ENCODE measurements at regions of chr19 and their contacts with region 1.

Region 1: DNA sequence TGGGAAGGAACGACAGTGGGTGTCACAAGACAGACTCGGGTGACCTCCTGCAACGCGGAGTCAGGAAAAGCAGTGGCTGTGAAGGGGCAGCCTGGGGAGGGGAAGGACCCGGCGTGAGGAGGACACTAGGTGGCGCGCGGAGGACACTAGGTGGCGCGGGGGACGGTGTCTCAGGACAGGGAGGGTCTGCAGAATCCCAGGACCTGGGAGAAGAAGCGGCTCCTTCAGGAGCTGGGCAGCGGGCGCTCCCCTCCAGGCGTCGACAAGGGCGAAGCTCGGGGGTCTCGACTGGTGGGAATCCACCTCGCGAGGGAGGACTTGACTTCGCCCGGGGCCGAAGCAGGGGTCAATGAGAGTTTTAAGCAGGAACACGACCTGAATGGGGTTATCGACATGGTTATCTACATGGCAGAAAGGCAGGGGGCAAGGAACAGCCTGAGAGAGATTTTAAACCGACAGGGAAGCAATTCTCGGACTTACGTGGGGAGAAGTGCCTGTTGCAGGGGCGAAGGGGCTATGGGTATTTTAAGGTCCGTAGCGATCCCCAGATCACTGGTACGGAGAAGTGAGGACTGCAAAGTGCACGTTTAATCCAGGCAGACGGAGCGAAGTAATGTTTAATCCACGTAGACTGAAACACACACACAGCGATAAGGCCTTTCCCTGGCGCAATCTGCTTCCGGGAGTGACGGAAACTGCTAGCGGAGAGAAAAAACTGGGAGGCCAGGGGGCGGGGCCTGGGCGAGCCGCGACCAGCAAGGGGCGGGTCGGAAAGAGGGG is at the start of gene ZNF616:
- DNase-seq: peak; percentile 97
- ATAC-seq: peak; percentile 82
- H3K4me3 Mint-ChIP-seq: peak within 1 kb of the TSS; percentile 98
- H3K27ac Mint-ChIP-seq: peak within 1 kb of the TSS; percentile 96
- H3K4me1 Mint-ChIP-seq: peaks cover 18% of the 10 kb centered on the region
- H3K27me3 Mint-ChIP-seq: no peaks in the 10 kb centered on the region
- total RNA-seq, gene ZNF616: 6.8 to 7.8 TPM

Region 2: GRCh38 chr19:52237771-52238400 is 98.4 kb after region 1 on chr19:
- CTCF ChIA-PET with region 1: interaction called, 28 read pairs
- DNase-seq: peak; percentile 70
- ATAC-seq: peak; percentile 57
- H3K4me3 Mint-ChIP-seq: no peak overlapping the region
- H3K27ac Mint-ChIP-seq: no peak overlapping the region
- H3K4me1 Mint-ChIP-seq: no peaks in the 10 kb centered on the region
- H3K27me3 Mint-ChIP-seq: no peaks in the 10 kb centered on the region

Region 3: DNA sequence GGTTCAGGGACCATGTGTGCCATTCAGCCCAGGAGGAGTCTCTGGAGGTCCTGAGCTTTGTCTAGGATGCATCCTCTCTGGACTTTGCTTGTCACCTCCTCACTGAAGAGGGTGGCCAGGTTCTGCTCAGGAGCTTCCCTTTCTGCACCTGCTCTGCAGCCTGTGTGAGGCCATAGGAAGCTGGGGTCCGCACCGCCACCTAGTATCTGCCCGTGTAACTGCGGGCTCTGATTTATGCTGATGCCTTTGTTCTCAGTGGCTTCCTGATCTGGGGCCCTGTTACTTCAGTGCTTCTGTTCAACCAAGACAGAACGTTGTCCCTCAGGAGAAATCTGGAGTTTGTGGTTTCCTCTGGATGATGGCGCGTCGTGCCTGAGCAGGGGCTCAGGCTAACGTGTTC is 212.1 kb after region 1 on chr19:
- CTCF ChIA-PET with region 1: no interaction called
- DNase-seq: no peak
- ATAC-seq: no peak
- H3K4me3 Mint-ChIP-seq: no peak overlapping the region
- H3K27ac Mint-ChIP-seq: no peak overlapping the region
- H3K4me1 Mint-ChIP-seq: no peaks in the 10 kb centered on the region
- H3K27me3 Mint-ChIP-seq: no peaks in the 10 kb centered on the region

Measured in activated CD8-positive, alpha-beta memory T cell treated with anti-CD3 and anti-CD28 coated beads, Interleukin-2, amount 10 ng/mL, durations not matched to agents 7 days and 5 days (primary cell).